Activated naive CD4-positive, alpha-beta T cell treated with anti-CD3 and anti-CD28 coated beads, Interleukin-2, amount 10 ng/mL, durations not matched to agents 7 days and 5 days (primary cell): ENCODE measurements at regions of chr19 and their contacts with region 1.

Region 1: DNA sequence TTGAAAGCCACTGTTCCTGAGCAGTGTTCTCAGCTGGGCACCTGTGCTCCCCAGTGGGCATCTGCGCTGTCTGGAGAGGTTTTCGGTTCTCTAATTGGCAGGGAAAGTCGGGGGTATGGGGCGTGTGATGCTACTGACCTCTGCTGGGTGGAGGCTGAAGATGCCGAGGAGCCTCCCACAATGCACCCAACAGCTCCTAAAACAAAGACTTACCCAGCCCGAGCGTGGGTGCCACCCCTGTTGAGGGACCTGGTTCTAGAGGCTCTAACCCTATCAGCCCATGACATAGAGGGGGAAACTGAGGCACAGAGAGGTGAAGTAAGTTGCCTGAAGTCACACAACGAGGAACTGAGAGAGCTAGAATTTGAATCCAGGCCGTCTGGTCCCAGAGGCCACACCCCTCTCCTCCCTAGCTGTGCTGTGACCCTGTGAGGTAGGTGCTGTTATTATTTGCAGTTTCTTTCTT is 2.3 kb downstream of the SPACA4 start:
- DNase-seq: peak; percentile 75
- H3K4me3 Mint-ChIP-seq: no peak overlapping the region
- H3K27ac Mint-ChIP-seq: peak overlapping the region; percentile 77
- H3K4me1 Mint-ChIP-seq: peaks cover 5% of the 10 kb centered on the region
- H3K27me3 Mint-ChIP-seq: no peaks in the 10 kb centered on the region

Region 2: GRCh38 chr19:48489608-48490216 is 119.1 kb before region 1 on chr19:
- CTCF ChIA-PET with region 1: interaction called, 19 read pairs
- DNase-seq: peak; percentile 86
- H3K4me3 Mint-ChIP-seq: no peak overlapping the region
- H3K27ac Mint-ChIP-seq: no peak overlapping the region
- H3K4me1 Mint-ChIP-seq: peaks cover 38% of the 10 kb centered on the region
- H3K27me3 Mint-ChIP-seq: peaks cover 61% of the 10 kb centered on the region

Region 3: GRCh38 chr19:48510421-48511280 is 98.2 kb before region 1 on chr19:
- CTCF ChIA-PET with region 1: interaction called, 30 read pairs
- DNase-seq: peak; percentile 86
- H3K4me3 Mint-ChIP-seq: peak overlapping the region; percentile 77
- H3K27ac Mint-ChIP-seq: no peak overlapping the region
- H3K4me1 Mint-ChIP-seq: peaks cover 16% of the 10 kb centered on the region
- H3K27me3 Mint-ChIP-seq: peaks cover 14% of the 10 kb centered on the region

Region 4: GRCh38 chr19:48618916-48619691 is 10.3 kb after region 1 on chr19 and contains the starts of genes RPL18 and SPHK2:
- CTCF ChIA-PET with region 1: interaction called, 13 read pairs
- DNase-seq: peak; percentile 96
- H3K4me3 Mint-ChIP-seq: peak within 1 kb of the TSS; percentile 95
- H3K27ac Mint-ChIP-seq: peak within 1 kb of the TSS; percentile 97
- H3K4me1 Mint-ChIP-seq: peaks cover 60% of the 10 kb centered on the region
- H3K27me3 Mint-ChIP-seq: peaks cover 4% of the 10 kb centered on the region

Region 5: GRCh38 chr19:48630296-48631063 is 21.6 kb after region 1 on chr19:
- CTCF ChIA-PET with region 1: no interaction called
- DNase-seq: no peak
- H3K4me3 Mint-ChIP-seq: no peak overlapping the region
- H3K27ac Mint-ChIP-seq: no peak overlapping the region
- H3K4me1 Mint-ChIP-seq: peaks cover 57% of the 10 kb centered on the region
- H3K27me3 Mint-ChIP-seq: no peaks in the 10 kb centered on the region